ENCODE measurements at regions of chr16 and their contacts with region 1.

Region 1: DNA sequence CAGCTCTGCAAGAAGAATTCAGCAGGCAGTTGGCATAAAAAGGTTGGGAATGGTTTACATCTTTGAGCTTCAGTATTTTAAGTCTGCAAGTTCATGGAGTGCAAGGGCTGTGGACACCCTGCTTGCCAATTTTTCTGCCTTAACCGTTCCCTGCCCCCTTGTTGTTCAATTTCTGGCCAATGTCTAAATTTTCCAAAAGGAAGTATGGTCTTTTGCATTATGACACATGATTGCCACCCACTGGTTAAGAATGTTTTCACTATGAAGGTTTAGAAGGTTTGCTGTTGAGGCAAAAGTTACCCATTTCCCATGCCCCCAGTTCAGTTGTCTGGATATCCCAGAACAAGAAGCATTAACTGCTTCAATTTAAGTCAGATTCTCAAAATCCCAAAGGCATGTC is 441.9 kb downstream of the CDH13 start:
- DNase-seq: no peak
- H3K4me3 ChIP-seq: no peak overlapping the region
- H3K27ac ChIP-seq: peak overlapping the region; percentile 47 to 55
- H3K4me1 ChIP-seq: peaks cover 3 to 14% of the 10 kb centered on the region in 2 donors
- H3K27me3 ChIP-seq: no peaks in the 10 kb centered on the region
- CTCF ChIP-seq: peak in 2 of 3 experiments; percentile 13 to 47

Region 2: DNA sequence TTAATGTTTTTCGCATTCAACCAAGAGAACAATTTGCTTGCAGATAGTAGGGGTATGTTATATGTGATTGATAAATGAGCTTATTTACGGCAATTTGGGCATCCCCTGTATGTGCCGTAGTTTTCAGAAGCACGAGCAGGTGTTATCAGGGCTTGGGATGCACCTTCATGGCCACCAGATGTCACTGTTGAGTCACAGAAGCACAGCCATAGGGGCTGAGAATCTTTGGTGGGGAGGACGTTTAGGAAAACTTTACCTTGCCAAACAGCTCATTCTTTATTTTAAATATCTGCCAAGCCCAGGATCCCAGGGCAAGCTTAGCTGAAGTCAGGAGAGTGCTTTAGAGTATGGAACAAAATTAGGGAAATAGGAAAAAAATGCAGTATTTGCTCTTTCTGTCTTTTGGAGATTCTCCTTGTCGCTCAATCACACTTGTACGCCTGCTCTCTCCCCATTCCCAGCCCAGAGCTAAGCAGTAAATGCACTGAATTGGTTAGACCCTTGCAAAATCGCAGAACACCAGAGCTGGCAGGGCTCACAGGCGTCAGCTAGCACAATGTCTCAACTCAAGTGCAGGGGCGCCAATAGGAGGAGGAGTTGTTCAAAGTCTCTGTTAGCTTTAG is 805.1 kb before region 1 on chr16:
- intact Hi-C with region 1: loop called (anchors 5 kb)
- DNase-seq: peak in 1 of 2 donors; percentile 70
- H3K4me3 ChIP-seq: peak overlapping the region in 1 of 2 donors; percentile 17
- H3K27ac ChIP-seq: peak overlapping the region in 1 of 2 donors; percentile 54
- H3K4me1 ChIP-seq: peaks cover 0 to 15% of the 10 kb centered on the region in 2 donors
- H3K27me3 ChIP-seq: no peaks in the 10 kb centered on the region
- CTCF ChIP-seq: peak; percentile 73 to 91 (median 89)

Region 3: DNA sequence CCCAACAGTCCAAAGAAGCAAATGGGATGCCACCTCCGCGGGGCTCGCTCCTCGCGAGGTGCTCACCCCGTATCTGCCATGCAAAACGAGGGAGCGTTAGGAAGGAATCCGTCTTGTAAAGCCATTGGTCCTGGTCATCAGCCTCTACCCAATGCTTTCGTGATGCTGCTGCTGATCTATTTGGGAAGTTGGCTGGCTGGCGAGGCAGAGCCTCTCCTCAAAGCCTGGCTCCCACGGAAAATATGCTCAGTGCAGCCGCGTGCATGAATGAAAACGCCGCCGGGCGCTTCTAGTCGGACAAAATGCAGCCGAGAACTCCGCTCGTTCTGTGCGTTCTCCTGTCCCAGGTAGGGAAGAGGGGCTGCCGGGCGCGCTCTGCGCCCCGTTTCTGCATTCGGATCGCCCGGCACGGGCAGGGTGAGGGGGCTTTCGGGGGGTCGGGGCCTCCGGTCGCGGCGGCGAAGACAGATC is 441.9 kb before region 1 on chr16 and contains the start of gene CDH13:
- intact Hi-C with region 1: loop called (anchors 5 kb)
- DNase-seq: peak in 1 of 2 donors; percentile 81
- H3K4me3 ChIP-seq: peak within 1 kb of the TSS; percentile 69 to 94
- H3K27ac ChIP-seq: peak within 1 kb of the TSS; percentile 94 to 97
- H3K4me1 ChIP-seq: peaks cover 5 to 28% of the 10 kb centered on the region in 2 donors
- H3K27me3 ChIP-seq: no peaks in the 10 kb centered on the region
- CTCF ChIP-seq: no peak
- total RNA-seq, gene CDH13: 160 TPM

Region 4: DNA sequence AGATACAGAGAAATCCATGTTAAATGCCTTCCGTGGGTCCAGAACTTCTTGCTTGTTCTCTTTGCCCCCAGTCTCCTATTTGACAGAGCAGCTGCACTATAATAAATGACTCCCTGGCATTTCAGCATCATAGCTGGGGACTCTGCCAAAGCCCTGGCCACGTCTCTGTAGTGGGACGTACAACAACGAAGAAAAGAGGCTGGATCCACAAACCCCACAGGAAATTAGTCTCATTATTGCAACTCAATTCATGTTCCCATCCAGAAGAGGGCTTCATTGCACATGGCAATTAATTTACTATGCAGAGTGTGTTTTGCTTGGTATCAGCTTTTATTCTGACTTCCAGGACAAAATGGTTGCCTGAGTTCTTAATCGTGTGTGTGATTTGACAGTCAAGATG is 320.7 kb before region 1 on chr16:
- intact Hi-C with region 1: loop called (anchors 5 kb)
- DNase-seq: peak; percentile 14 to 85
- H3K4me3 ChIP-seq: no peak overlapping the region
- H3K27ac ChIP-seq: peak overlapping the region in 1 of 2 donors; percentile 33
- H3K4me1 ChIP-seq: peaks cover 0 to 4% of the 10 kb centered on the region in 2 donors
- H3K27me3 ChIP-seq: no peaks in the 10 kb centered on the region
- CTCF ChIP-seq: peak in 1 of 3 experiments; percentile 30

Region 5: DNA sequence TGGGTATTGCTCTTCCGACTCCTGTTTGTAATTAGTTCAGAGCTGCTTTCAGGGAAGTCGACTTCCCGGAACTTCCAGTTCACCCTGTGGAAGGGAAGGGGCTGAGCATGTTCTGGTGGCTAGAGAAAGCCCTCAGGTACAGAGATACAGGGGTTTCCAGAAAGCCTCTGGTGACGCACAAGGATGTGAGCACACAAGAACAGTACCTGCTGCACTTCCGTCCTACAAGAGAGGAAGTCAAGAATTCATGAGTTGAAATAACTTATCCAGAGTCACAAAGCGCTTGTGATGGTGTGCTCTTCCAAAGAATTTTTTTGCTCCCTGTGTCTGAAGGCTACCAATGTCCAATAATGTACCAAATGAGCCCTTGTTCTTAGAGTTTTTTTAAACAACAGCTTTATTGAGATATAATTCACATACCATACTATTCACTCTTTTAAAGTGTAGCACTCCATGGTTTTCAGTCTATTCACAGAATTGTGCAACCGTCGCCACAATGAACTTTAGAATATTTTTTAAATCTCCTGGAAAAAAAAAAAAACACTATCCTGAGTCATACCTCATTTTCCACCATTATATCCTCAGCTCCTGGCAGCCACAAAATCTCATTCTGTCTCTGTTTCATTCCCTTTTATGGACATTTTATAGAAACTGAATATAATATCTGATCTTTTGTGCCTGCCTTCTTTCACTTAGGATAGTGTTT is 114.3 kb before region 1 on chr16:
- intact Hi-C with region 1: no loop called
- DNase-seq: no peak
- H3K4me3 ChIP-seq: no peak overlapping the region
- H3K27ac ChIP-seq: peak overlapping the region; percentile 36 to 41
- H3K4me1 ChIP-seq: peaks cover 0 to 13% of the 10 kb centered on the region in 2 donors
- H3K27me3 ChIP-seq: no peaks in the 10 kb centered on the region
- CTCF ChIP-seq: no peak

Region 6: GRCh38 chr16:83010776-83011720 is 57.6 kb before region 1 on chr16:
- intact Hi-C with region 1: loop called (anchors 5 kb)
- DNase-seq: no peak
- H3K4me3 ChIP-seq: peak overlapping the region; percentile 12 to 30
- H3K27ac ChIP-seq: peak overlapping the region; percentile 65 to 76
- H3K4me1 ChIP-seq: peaks cover 0 to 21% of the 10 kb centered on the region in 2 donors
- H3K27me3 ChIP-seq: no peaks in the 10 kb centered on the region
- CTCF ChIP-seq: no peak

Measured in ascending aorta (tissue), 2 donors.